Left ventricle myocardium superior (tissue), 1 donor: ENCODE measurements at regions of chr5 and their contacts with region 1.

Region 1: GRCh38 chr5:136249678-136250266 is 56.8 kb upstream of the SMIM32 start:
- DNase-seq: peak; percentile 66
- ATAC-seq: peak; percentile 65

Region 2: GRCh38 chr5:136769900-136770684 is 520.3 kb after region 1 on chr5:
- intact Hi-C with region 1: loop called (anchors 5 kb)
- DNase-seq: peak; percentile 60
- ATAC-seq: peak; percentile 81